B cell (primary cell): ENCODE measurements at regions of chr17 and their contacts with region 1.

Region 1: DNA sequence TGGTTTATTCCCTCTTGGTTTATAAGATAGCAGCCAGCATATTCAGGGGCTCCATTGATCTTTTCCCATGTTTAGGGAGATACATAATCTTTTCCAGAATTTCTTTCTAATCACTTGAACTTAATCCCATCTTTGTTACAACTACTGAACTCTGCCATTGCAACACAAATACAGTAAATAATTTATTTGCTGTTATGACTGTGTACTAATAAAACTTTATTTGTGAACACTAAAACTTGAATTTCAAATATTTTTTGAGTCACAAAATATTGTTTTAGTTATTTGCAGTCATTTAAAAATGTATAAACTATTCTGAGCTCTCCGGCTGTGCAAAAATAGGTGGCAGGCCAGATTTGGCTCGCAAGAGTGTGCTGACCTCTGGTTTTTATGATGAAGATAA is 86.6 kb downstream of the TANC2 start:
- DNase-seq: no peak
- ATAC-seq: no peak
- H3K4me3 ChIP-seq: no peak overlapping the region
- H3K4me3 Mint-ChIP-seq: no peak overlapping the region
- H3K27ac ChIP-seq: no peak overlapping the region
- H3K27ac Mint-ChIP-seq: no peak overlapping the region
- H3K4me1 ChIP-seq: no peaks in the 10 kb centered on the region
- H3K4me1 Mint-ChIP-seq: no peaks in the 10 kb centered on the region
- H3K27me3 ChIP-seq: no peaks in the 10 kb centered on the region
- H3K27me3 Mint-ChIP-seq: no peaks in the 10 kb centered on the region
- CTCF ChIP-seq: no peak

Region 2: GRCh38 chr17:63041722-63042121 is 10.9 kb before region 1 on chr17:
- CTCF ChIA-PET with region 1: no interaction called
- POLR2A ChIA-PET with region 1: no interaction called
- intact Hi-C with region 1: loop called (anchors 1 kb)
- DNase-seq: no peak
- ATAC-seq: no peak
- H3K4me3 ChIP-seq: no peak overlapping the region
- H3K4me3 Mint-ChIP-seq: no peak overlapping the region
- H3K27ac ChIP-seq: no peak overlapping the region
- H3K27ac Mint-ChIP-seq: no peak overlapping the region
- H3K4me1 ChIP-seq: no peaks in the 10 kb centered on the region
- H3K4me1 Mint-ChIP-seq: no peaks in the 10 kb centered on the region
- H3K27me3 ChIP-seq: no peaks in the 10 kb centered on the region
- H3K27me3 Mint-ChIP-seq: peaks cover 4% of the 10 kb centered on the region
- CTCF ChIP-seq: no peak

Region 3: DNA sequence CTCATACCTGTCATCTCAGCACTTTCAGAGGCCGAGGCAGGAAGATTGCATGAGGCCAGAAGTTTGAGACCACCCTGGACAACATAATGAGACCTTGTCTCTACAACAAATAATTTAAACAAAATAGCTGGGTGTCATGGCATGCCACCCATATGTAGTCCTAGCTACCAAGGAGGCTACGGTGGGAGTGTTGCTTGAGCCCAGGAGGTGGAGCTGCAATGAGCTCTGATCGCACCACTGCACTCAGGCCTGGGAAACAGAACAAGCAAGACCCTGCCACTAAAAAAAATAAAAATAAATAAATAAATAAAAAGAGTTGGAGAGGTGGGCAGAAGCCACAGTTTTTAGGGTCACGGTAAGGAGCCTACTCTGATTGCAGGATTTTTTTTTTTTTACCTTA is 49.4 kb after region 1 on chr17:
- CTCF ChIA-PET with region 1: no interaction called
- POLR2A ChIA-PET with region 1: no interaction called
- intact Hi-C with region 1: no loop called
- DNase-seq: no peak
- ATAC-seq: no peak
- H3K4me3 ChIP-seq: no peak overlapping the region
- H3K4me3 Mint-ChIP-seq: no peak overlapping the region
- H3K27ac ChIP-seq: no peak overlapping the region
- H3K27ac Mint-ChIP-seq: no peak overlapping the region
- H3K4me1 ChIP-seq: peaks cover 0 to 7% of the 10 kb centered on the region in 2 donors
- H3K4me1 Mint-ChIP-seq: peaks cover 11% of the 10 kb centered on the region
- H3K27me3 ChIP-seq: no peaks in the 10 kb centered on the region
- H3K27me3 Mint-ChIP-seq: no peaks in the 10 kb centered on the region
- CTCF ChIP-seq: no peak